Naive thymus-derived CD4-positive, alpha-beta T cell (primary cell): ENCODE measurements at regions of chr9 and their contacts with region 1.

Region 1: GRCh38 chr9:91131433-91131839 is 230.3 kb downstream of the AUH start:
- DNase-seq: peak in 1 of 9 donors; percentile 72
- ATAC-seq: peak; percentile 85
- H3K4me3 ChIP-seq: no peak overlapping the region
- H3K4me3 Mint-ChIP-seq: peak overlapping the region in 1 of 10 donors; percentile 67
- H3K27ac ChIP-seq: no peak overlapping the region
- H3K27ac Mint-ChIP-seq: peak overlapping the region in 2 of 9 donors; percentile 31 to 95
- H3K4me1 ChIP-seq: peaks cover 0 to 6% of the 10 kb centered on the region in 2 donors
- H3K4me1 Mint-ChIP-seq: peaks cover 0 to 51% (median 4%) of the 10 kb centered on the region in 7 donors
- H3K27me3 ChIP-seq: no peaks in the 10 kb centered on the region
- H3K27me3 Mint-ChIP-seq: no peaks in the 10 kb centered on the region

Region 2: DNA sequence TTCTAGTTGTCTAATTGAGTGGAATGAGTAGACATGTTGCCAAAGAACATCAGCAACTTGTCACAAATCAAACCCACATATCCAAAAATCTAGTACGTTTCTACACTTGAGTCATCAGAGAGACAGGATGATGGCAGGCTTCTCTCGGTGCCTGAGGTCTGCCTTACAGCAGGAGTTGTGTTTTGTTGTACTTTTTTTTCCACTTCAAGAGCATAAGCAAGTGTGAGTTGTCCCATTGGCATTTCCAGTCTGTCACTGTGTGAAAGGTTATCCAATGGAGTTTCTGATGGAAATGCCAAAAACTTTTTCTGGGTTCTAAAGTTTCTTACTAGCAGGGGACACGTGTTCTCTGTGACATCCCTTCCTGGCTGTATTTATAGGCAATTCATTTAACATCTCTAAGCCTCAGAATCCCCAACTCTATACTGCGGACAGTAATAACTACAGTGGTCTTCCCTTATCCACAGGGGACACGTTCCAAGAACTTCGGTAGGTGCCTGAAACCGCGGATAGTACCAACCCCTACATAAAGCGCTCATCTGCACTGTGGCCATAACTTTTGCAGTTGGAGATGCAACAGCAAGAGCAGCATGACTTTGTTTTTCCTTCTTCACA is 83.3 kb before region 1 on chr9:
- CTCF ChIA-PET with region 1: no interaction called
- POLR2A ChIA-PET with region 1: no interaction called
- intact Hi-C with region 1: loop called in 1 of 2 experiments (anchors 1 kb)
- DNase-seq: peak in 1 of 9 donors; percentile 39
- ATAC-seq: peak; percentile 14
- H3K4me3 ChIP-seq: no peak overlapping the region
- H3K4me3 Mint-ChIP-seq: peak overlapping the region; percentile 55 to 78 (median 66)
- H3K27ac ChIP-seq: no peak overlapping the region
- H3K27ac Mint-ChIP-seq: peak overlapping the region in 6 of 9 donors; percentile 28 to 88 (median 41)
- H3K4me1 ChIP-seq: peaks cover 5 to 7% of the 10 kb centered on the region in 2 donors
- H3K4me1 Mint-ChIP-seq: peaks cover 9 to 55% (median 19%) of the 10 kb centered on the region in 7 donors
- H3K27me3 ChIP-seq: peaks cover 0 to 5% of the 10 kb centered on the region in 2 donors
- H3K27me3 Mint-ChIP-seq: peaks cover 11 to 34% (median 23%) of the 10 kb centered on the region in 5 donors

Region 3: GRCh38 chr9:91164724-91165520 is 33.5 kb after region 1 on chr9:
- CTCF ChIA-PET with region 1: no interaction called
- POLR2A ChIA-PET with region 1: no interaction called
- intact Hi-C with region 1: loop called in 1 of 2 experiments (anchors 1 kb)
- DNase-seq: peak in 1 of 9 donors; percentile 78
- ATAC-seq: peak; percentile 90
- H3K4me3 ChIP-seq: no peak overlapping the region
- H3K4me3 Mint-ChIP-seq: peak overlapping the region in 2 of 10 donors; percentile 6 to 89
- H3K27ac ChIP-seq: no peak overlapping the region
- H3K27ac Mint-ChIP-seq: peak overlapping the region in 2 of 9 donors; percentile 72 to 97
- H3K4me1 ChIP-seq: peaks cover 15 to 38% of the 10 kb centered on the region in 2 donors
- H3K4me1 Mint-ChIP-seq: peaks cover 13 to 63% (median 35%) of the 10 kb centered on the region in 7 donors
- H3K27me3 ChIP-seq: no peaks in the 10 kb centered on the region
- H3K27me3 Mint-ChIP-seq: no peaks in the 10 kb centered on the region

Region 4: DNA sequence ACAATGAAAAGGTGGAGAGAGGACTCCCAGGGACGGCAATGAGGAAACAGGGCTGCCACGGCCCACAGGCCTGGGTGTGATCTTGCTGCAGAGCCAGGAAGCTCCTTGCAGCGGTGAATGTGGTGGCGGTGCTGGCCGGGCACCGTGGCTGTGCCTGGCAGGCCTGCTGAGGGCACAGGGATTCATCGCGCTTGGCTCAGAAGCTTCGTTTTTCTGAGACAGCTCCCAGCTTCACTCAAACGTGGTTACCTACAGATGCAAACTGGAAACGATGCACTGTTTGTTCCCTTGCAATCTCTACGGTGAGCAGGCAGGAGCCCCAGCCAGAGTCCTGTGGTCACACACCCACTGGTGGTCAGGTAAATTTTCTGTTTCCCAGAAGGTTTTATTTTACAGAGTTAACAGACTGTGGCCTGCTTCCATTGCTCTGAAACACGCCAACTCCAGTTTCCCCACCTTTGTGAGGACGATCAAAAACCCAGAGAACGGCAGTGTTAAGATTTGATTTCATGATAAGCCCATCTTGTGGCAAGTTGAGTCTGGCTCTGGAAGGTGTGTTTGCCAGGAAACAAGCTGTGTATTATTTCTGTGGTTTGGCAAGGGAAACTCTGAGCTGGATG is 46.3 kb after region 1 on chr9:
- CTCF ChIA-PET with region 1: no interaction called
- POLR2A ChIA-PET with region 1: no interaction called
- intact Hi-C with region 1: loop called in 1 of 2 experiments (anchors 5 kb)
- DNase-seq: peak in 2 of 9 donors; percentile 13 to 64
- ATAC-seq: peak; percentile 60
- H3K4me3 ChIP-seq: no peak overlapping the region
- H3K4me3 Mint-ChIP-seq: peak overlapping the region; percentile 39 to 73 (median 58)
- H3K27ac ChIP-seq: no peak overlapping the region
- H3K27ac Mint-ChIP-seq: peak overlapping the region in 8 of 9 donors; percentile 19 to 91 (median 64)
- H3K4me1 ChIP-seq: peaks cover 16 to 25% of the 10 kb centered on the region in 2 donors
- H3K4me1 Mint-ChIP-seq: peaks cover 23 to 62% (median 33%) of the 10 kb centered on the region in 7 donors
- H3K27me3 ChIP-seq: no peaks in the 10 kb centered on the region
- H3K27me3 Mint-ChIP-seq: no peaks in the 10 kb centered on the region

Region 5: GRCh38 chr9:91572044-91572443 is 440.6 kb after region 1 on chr9:
- CTCF ChIA-PET with region 1: no interaction called
- POLR2A ChIA-PET with region 1: no interaction called
- intact Hi-C with region 1: no loop called
- DNase-seq: no peak
- ATAC-seq: no peak
- H3K4me3 ChIP-seq: no peak overlapping the region
- H3K4me3 Mint-ChIP-seq: no peak overlapping the region
- H3K27ac ChIP-seq: no peak overlapping the region
- H3K27ac Mint-ChIP-seq: no peak overlapping the region
- H3K4me1 ChIP-seq: no peaks in the 10 kb centered on the region
- H3K4me1 Mint-ChIP-seq: no peaks in the 10 kb centered on the region
- H3K27me3 ChIP-seq: no peaks in the 10 kb centered on the region
- H3K27me3 Mint-ChIP-seq: peaks cover 16 to 27% (median 26%) of the 10 kb centered on the region in 5 donors